Ascending aorta (tissue), 2 donors: ENCODE measurements at regions of chr11 and their contacts with region 1.

Region 1: GRCh38 chr11:20647976-20648565 is 21.3 kb upstream of the NELL1 start:
- DNase-seq: no peak
- H3K4me3 ChIP-seq: no peak overlapping the region
- H3K27ac ChIP-seq: no peak overlapping the region
- H3K4me1 ChIP-seq: no peaks in the 10 kb centered on the region
- H3K27me3 ChIP-seq: no peaks in the 10 kb centered on the region
- CTCF ChIP-seq: peak; percentile 62 to 89 (median 81)

Region 2: GRCh38 chr11:20544603-20545237 is 103.4 kb before region 1 on chr11:
- intact Hi-C with region 1: no loop called
- DNase-seq: no peak
- H3K4me3 ChIP-seq: no peak overlapping the region
- H3K27ac ChIP-seq: no peak overlapping the region
- H3K4me1 ChIP-seq: no peaks in the 10 kb centered on the region
- H3K27me3 ChIP-seq: no peaks in the 10 kb centered on the region
- CTCF ChIP-seq: no peak

Region 3: DNA sequence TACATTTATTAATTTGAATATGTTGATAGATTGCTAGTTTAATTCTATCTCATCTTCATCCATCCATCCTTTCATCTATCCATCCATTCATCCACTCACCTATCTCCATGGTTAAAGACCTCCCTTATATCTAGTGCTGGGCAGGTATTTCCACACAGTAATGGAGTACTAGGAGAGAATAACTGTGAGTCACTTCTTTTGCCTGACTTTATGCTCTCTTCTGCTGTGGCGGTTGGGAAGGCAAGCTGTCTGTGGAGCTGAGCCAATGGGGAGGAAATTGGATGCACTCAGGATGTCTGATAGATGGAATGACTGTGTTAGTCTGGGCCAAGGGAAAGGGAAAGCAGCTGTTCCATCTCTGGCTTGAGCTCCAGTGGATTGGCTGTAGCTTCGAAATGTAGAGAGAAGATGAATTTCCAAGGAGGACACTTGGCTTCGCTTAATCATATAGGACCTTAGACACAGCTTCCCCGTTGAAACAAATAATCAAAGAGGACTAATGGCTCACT is 81.6 kb after region 1 on chr11:
- intact Hi-C with region 1: no loop called
- DNase-seq: no peak
- H3K4me3 ChIP-seq: no peak overlapping the region
- H3K27ac ChIP-seq: no peak overlapping the region
- H3K4me1 ChIP-seq: no peaks in the 10 kb centered on the region
- H3K27me3 ChIP-seq: no peaks in the 10 kb centered on the region
- CTCF ChIP-seq: no peak

Region 4: DNA sequence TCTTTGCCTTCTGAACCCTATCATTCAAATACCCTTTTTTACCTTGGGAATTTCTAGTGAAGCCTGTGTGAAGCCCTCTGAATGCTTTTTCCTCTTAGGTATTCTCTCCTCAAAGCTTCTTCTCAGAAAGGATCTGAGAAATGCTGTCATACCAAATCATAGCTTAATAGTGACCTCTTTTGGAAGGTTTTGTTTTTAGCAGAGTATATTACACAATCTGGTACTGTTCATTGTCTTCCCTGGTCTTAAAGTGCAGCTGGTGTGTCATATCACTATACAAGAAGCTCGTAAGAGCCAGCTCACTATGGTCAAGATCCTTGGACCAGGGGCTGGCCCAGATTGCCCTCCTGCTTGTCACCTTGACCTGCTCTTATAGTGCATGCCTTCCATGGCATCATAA is 1340.4 kb after region 1 on chr11:
- intact Hi-C with region 1: loop called (anchors 5 kb)
- DNase-seq: no peak
- H3K4me3 ChIP-seq: no peak overlapping the region
- H3K27ac ChIP-seq: no peak overlapping the region
- H3K4me1 ChIP-seq: no peaks in the 10 kb centered on the region
- H3K27me3 ChIP-seq: no peaks in the 10 kb centered on the region
- CTCF ChIP-seq: peak in 1 of 3 experiments; percentile 39

Region 5: DNA sequence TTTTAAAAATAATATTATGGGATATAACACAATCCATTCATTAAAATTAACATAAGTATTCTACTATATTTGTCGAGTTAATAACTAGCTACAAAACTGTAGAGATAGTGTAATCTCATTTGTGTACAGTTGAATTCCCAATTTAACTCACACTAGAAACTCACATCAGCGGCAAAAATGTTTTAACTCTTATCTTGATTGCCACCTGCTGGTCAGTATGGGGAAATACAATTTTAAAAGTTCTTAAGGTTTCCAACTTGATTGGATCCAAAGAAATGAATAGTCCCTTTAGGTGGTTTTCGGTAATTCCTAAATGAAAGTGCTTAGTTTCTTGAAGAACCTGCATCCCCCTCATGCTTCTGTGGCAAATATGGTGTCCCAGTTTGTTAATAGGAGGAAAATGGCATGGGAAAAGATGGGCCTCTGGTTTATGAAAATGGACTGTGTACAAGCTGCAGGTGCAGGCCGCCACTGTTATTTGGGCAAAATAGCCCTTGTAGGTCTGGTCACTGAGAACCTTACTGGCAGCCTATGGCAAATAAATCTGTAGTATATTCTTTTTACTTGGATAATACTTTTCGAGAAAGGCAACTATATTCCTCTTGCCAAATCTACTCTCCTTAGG is 1656.4 kb after region 1 on chr11:
- intact Hi-C with region 1: loop called (anchors 5 kb)
- DNase-seq: no peak
- H3K4me3 ChIP-seq: no peak overlapping the region
- H3K27ac ChIP-seq: no peak overlapping the region
- H3K4me1 ChIP-seq: no peaks in the 10 kb centered on the region
- H3K27me3 ChIP-seq: no peaks in the 10 kb centered on the region
- CTCF ChIP-seq: peak in 2 of 3 experiments; percentile 39 to 62